ENCODE measurements at regions of chr12 and their contacts with region 1.

Region 1: GRCh38 chr12:119444456-119445044 is 110.0 kb downstream of the CCDC60 start:
- DNase-seq: peak; percentile 57
- H3K4me3 ChIP-seq: no peak overlapping the region
- H3K27ac ChIP-seq: no peak overlapping the region
- H3K4me1 ChIP-seq: no peaks in the 10 kb centered on the region
- CTCF ChIP-seq: peak; percentile 100

Region 2: DNA sequence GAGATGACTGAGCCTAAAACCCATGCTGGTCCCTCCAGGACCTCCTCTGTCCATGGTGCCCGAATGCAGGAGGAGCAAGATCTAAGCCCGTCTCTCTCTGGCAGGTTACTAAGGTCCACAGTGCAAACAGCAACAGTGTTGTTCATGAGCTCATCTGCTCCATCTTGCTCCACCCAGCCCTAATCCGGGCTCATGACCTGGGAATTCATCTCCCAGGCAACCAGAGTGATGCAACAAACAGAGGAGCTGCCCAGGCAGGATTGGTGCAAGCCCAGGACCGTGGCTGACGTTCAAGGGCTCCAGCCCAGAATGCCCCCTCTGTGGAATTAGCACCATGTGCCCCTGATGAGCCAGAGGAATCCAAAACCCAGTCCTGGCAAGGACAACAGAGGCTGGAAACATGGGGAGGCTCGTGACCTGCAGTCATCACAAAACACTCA is 235.9 kb before region 1 on chr12:
- CTCF ChIA-PET with region 1: no interaction called
- POLR2A ChIA-PET with region 1: no interaction called
- intact Hi-C with region 1: no loop called
- DNase-seq: no peak
- H3K4me3 ChIP-seq: no peak overlapping the region
- H3K27ac ChIP-seq: no peak overlapping the region
- H3K4me1 ChIP-seq: no peaks in the 10 kb centered on the region
- CTCF ChIP-seq: no peak

Region 3: DNA sequence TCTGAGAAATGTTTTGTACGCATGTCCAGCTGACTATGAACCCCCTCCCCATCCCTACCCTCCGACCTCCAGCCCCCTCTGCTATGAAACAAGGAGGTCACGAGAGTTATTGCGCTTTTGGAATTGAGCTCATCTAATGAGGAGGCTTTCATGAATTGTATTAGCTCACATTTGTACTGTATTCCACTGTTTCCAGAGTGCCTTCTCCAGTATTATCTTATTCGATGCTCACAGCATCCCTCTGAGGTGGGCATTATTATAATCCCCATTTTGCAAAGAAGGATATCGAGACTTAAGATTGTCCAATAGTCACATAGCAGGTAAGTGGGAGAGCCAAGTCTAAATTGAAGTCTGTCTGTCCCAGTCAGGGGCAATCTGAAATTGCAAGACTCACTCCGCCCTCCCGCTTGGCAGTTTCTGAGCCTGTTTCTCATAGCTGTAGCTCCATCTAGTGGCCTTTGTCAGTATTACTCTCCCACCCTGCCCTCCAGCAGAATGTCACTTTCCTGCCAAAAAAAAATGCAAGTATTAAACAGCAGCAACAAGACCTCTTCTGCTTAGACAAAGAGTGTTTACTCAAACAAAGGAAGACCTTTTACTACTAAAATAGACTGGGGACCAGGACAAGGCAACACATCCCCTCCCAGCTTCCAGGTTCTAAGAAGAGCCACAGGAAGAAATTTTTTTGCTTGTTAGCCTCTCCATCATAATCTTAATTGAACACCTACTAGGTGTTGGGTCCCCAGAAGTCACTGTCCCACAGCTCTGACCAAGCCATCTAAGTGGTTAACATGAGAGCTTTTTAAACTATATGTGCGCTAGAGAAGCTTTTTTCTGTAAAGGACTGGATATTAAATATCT is 100.4 kb after region 1 on chr12:
- CTCF ChIA-PET with region 1: no interaction called
- POLR2A ChIA-PET with region 1: interaction called, 3 read pairs
- intact Hi-C with region 1: loop called (anchors 1 kb)
- DNase-seq: peak; percentile 64
- H3K4me3 ChIP-seq: no peak overlapping the region
- H3K27ac ChIP-seq: no peak overlapping the region
- H3K4me1 ChIP-seq: no peaks in the 10 kb centered on the region
- CTCF ChIP-seq: peak; percentile 89

Region 4: GRCh38 chr12:119649202-119649808 is 204.8 kb after region 1 on chr12:
- CTCF ChIA-PET with region 1: no interaction called
- POLR2A ChIA-PET with region 1: no interaction called
- intact Hi-C with region 1: loop called (anchors 2 kb)
- DNase-seq: peak; percentile 24
- H3K4me3 ChIP-seq: no peak overlapping the region
- H3K27ac ChIP-seq: no peak overlapping the region
- H3K4me1 ChIP-seq: no peaks in the 10 kb centered on the region
- CTCF ChIP-seq: peak; percentile 92

Region 5: GRCh38 chr12:119667577-119668323 is 223.2 kb after region 1 on chr12 and contains the start of gene PRKAB1:
- CTCF ChIA-PET with region 1: no interaction called
- POLR2A ChIA-PET with region 1: no interaction called
- intact Hi-C with region 1: loop called (anchors 5 kb)
- DNase-seq: peak; percentile 99
- H3K4me3 ChIP-seq: peak within 1 kb of the TSS; percentile 92
- H3K27ac ChIP-seq: peak within 1 kb of the TSS; percentile 89
- H3K4me1 ChIP-seq: peaks cover 36% of the 10 kb centered on the region
- CTCF ChIP-seq: peak; percentile 92
- total RNA-seq, gene PRKAB1: 21.8 and 32.4 TPM in 2 replicates

Region 6: GRCh38 chr12:119902084-119902509 is 457.5 kb after region 1 on chr12:
- CTCF ChIA-PET with region 1: no interaction called
- POLR2A ChIA-PET with region 1: no interaction called
- intact Hi-C with region 1: loop called (anchors 10 kb)
- DNase-seq: peak; percentile 81
- H3K4me3 ChIP-seq: no peak overlapping the region
- H3K27ac ChIP-seq: no peak overlapping the region
- H3K4me1 ChIP-seq: no peaks in the 10 kb centered on the region
- CTCF ChIP-seq: peak; percentile 93

Measured in OCI-LY7 (cell line).